ENCODE measurements at regions of chr18 and their contacts with region 1.

Region 1: GRCh38 chr18:63578357-63578958 is 8.7 kb upstream of the SERPINB13 start:
- DNase-seq: peak; percentile 67
- H3K4me3 Mint-ChIP-seq: no peak overlapping the region
- H3K27ac Mint-ChIP-seq: no peak overlapping the region
- H3K4me1 Mint-ChIP-seq: peaks cover 15% of the 10 kb centered on the region
- H3K27me3 Mint-ChIP-seq: no peaks in the 10 kb centered on the region
- CTCF ChIP-seq: peak; percentile 75

Region 2: GRCh38 chr18:63528863-63529492 is 49.5 kb before region 1 on chr18:
- CTCF ChIA-PET with region 1: interaction called, 20 read pairs
- POLR2A ChIA-PET with region 1: interaction called, 8 read pairs
- intact Hi-C with region 1: no loop called
- DNase-seq: no peak
- H3K4me3 Mint-ChIP-seq: no peak overlapping the region
- H3K27ac Mint-ChIP-seq: no peak overlapping the region
- H3K4me1 Mint-ChIP-seq: no peaks in the 10 kb centered on the region
- H3K27me3 Mint-ChIP-seq: no peaks in the 10 kb centered on the region
- CTCF ChIP-seq: no peak

Region 3: GRCh38 chr18:63553117-63553516 is 25.3 kb before region 1 on chr18:
- CTCF ChIA-PET with region 1: interaction called, 12 read pairs
- POLR2A ChIA-PET with region 1: interaction called, 21 read pairs
- intact Hi-C with region 1: no loop called
- DNase-seq: peak; percentile 47
- H3K4me3 Mint-ChIP-seq: no peak overlapping the region
- H3K27ac Mint-ChIP-seq: peak overlapping the region; percentile 80
- H3K4me1 Mint-ChIP-seq: peaks cover 18% of the 10 kb centered on the region
- H3K27me3 Mint-ChIP-seq: no peaks in the 10 kb centered on the region
- CTCF ChIP-seq: no peak

Region 4: DNA sequence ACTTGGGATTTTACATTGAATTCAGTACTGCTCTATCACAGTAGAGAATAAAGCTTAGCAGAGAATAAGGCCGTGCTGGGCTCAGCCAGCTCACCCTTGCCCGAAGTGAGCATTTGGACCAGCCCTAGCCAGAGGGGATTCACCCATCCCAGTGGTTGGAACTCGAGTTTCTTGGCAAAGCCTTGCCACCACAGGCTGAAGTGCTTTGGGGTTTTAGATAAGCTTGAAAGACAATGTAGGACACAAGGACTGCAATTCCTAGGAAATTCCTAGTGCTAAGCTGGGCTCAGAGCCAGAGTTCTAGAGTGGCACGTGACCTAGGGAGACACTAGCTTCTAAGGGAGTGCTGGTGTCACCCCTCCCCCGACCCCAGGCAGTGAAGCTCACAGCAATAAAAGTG is 152.3 kb after region 1 on chr18:
- CTCF ChIA-PET with region 1: interaction called, 14 read pairs
- POLR2A ChIA-PET with region 1: no interaction called
- intact Hi-C with region 1: no loop called
- DNase-seq: peak; percentile 76
- H3K4me3 Mint-ChIP-seq: peak overlapping the region; percentile 12
- H3K27ac Mint-ChIP-seq: peak overlapping the region; percentile 44
- H3K4me1 Mint-ChIP-seq: peaks cover 11% of the 10 kb centered on the region
- H3K27me3 Mint-ChIP-seq: no peaks in the 10 kb centered on the region
- CTCF ChIP-seq: no peak

Measured in MCF 10A (cell line).